SK-N-SH (cell line): ENCODE measurements at regions of chr17 and their contacts with region 1.

Region 1: DNA sequence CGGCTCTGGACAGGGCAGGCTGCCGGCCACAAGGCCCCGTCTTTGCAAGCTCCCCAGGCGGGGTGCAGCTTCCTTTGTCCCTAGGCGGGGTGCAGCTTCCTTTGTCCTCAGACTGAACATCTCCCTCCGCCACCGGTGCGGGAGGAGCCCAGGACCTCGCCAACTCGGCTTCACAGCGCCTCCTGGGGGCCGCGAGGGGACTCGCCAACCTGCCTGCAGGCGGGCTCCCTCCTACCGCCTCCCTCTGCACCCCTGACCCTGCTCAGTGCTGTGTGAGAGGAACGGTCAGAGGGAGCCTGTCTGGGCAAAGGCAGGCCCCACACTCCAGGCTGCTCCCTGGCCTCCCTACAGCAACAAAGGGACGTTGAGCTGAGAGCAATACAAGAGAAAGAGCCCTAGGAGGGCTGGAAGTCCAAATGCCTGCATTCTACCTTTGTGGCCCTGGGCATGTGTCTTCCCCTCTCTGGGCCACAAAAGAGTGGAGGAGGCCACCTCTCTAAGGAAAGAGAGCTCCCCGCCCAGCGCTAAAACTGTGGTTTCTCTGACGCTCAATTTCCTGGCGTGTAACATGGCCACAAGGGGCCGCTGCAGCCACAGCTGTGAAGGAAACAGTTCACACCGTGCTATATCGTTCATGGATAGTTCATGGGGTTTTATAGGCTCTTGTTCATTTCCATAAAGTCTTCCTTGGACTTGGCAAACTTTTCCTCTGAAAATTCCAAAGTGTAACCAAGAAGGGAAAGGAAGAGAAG is 20.9 kb upstream of the KRT19 start:
- DNase-seq: peak; percentile 92
- H3K4me3 ChIP-seq: peak overlapping the region; percentile 21 to 25; a peak in 2 of 4 replicates
- H3K27ac ChIP-seq: peak overlapping the region; percentile 85 to 86
- H3K4me1 ChIP-seq: peaks cover 17 to 30% of the 10 kb centered on the region in 2 experiments; a peak in 3 of 4 replicates
- H3K27me3 ChIP-seq: no peaks in the 10 kb centered on the region
- CTCF ChIP-seq: peak; percentile 94
- EP300 ChIP-seq: peak in 1 of 2 experiments; percentile 6; a peak in 2 of 4 replicates
- RAD21 ChIP-seq: peak; percentile 92

Region 2: GRCh38 chr17:40803617-40804082 is 745.4 kb before region 1 on chr17:
- CTCF ChIA-PET with region 1: interaction called, 11 read pairs
- POLR2A ChIA-PET with region 1: no interaction called
- DNase-seq: peak; percentile 86
- H3K4me3 ChIP-seq: no peak overlapping the region; a peak in 1 of 4 replicates
- H3K27ac ChIP-seq: no peak overlapping the region
- H3K4me1 ChIP-seq: peaks cover 0 to 2% of the 10 kb centered on the region in 2 experiments; a peak in 1 of 4 replicates
- H3K27me3 ChIP-seq: peaks cover 52% of the 10 kb centered on the region
- CTCF ChIP-seq: peak; percentile 94
- EP300 ChIP-seq: no peak
- RAD21 ChIP-seq: peak; percentile 89

Region 3: DNA sequence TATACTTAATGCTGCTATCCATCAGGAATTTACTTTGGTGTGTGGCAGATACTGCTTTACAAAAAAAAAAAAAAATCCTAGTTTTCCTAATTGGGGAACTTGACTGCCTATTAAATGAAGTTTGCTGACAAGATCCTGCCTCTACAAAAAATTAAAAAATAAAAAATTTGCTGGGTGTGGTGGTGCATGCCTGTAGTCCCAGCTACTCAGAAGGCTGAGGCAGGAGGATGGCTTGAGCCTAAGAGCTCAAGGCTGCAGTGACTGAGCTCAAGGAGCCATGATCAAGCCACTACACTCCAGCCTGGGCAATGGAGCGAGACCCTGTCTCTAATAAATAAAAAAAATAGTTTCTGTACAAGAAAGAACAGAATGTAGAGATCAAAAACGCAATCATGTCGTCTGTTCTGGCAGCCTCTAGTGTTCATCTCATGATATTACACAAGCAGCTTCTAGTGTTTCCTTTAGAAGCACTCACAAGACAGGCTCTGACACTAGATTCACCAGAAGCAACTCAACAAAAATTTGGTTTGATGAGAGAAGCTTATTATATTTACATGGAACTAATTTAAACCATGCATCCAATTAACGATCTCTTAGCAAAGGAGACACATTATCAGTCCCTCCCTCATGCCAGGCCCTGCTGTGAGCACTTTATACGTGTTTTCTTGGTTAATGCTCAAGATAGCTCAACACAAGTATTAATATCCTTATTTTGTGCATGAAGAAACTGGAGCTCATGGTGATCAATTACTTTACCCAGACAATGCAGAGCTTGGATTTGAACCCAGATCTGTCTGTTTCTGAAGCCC is 226.7 kb before region 1 on chr17:
- CTCF ChIA-PET with region 1: interaction called, 61 read pairs
- POLR2A ChIA-PET with region 1: no interaction called
- DNase-seq: peak; percentile 50
- H3K4me3 ChIP-seq: no peak overlapping the region
- H3K27ac ChIP-seq: no peak overlapping the region
- H3K4me1 ChIP-seq: no peaks in the 10 kb centered on the region
- H3K27me3 ChIP-seq: no peaks in the 10 kb centered on the region
- CTCF ChIP-seq: peak; percentile 75
- EP300 ChIP-seq: no peak
- RAD21 ChIP-seq: peak; percentile 66

Region 4: GRCh38 chr17:41457676-41458075 is 91.3 kb before region 1 on chr17:
- CTCF ChIA-PET with region 1: interaction called, 16 read pairs
- POLR2A ChIA-PET with region 1: no interaction called
- DNase-seq: no peak
- H3K4me3 ChIP-seq: no peak overlapping the region
- H3K27ac ChIP-seq: no peak overlapping the region
- H3K4me1 ChIP-seq: peaks cover 0 to 6% of the 10 kb centered on the region in 2 experiments; a peak in 1 of 4 replicates
- H3K27me3 ChIP-seq: no peaks in the 10 kb centered on the region
- CTCF ChIP-seq: no peak
- EP300 ChIP-seq: no peak
- RAD21 ChIP-seq: no peak

Region 5: DNA sequence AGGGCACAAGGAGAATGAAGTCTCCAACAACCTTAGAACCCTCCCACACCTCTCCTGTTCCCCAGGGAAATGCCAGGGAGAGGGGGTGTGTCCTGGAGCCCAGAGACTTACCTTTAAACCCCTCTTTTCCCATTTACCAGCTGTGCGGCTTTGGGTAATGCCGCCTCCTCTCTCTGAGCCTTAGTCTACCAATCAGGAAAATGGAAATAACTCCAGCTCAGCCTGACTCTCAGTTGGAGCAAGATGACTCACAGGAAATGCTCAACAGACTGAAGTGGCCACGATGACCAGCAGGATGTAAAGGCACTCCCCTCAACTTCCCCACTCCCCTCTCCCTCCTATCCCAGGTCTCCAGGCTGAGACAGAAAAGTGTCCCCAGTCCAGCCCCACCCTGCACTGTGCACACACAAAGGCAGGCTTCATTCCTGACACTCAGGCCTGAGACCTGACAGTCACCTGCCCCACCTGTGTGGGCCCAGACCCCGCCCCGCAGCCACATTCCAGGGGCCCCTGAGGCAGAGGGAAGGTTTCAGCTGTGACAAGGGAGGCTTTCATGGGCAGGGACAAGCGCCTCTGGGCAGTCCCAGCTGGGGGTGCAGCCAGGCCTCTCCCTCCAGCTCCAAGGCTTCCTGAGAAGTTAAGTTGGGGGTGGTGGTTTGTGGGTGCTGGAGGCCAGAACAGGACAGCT is 27.3 kb before region 1 on chr17:
- CTCF ChIA-PET with region 1: interaction called, 144 read pairs
- POLR2A ChIA-PET with region 1: interaction called, 9 read pairs
- DNase-seq: no peak
- H3K4me3 ChIP-seq: no peak overlapping the region
- H3K27ac ChIP-seq: peak overlapping the region; percentile 59 to 75; a peak in 3 of 4 replicates
- H3K4me1 ChIP-seq: peaks cover 41 to 61% of the 10 kb centered on the region in 2 experiments
- H3K27me3 ChIP-seq: no peaks in the 10 kb centered on the region
- CTCF ChIP-seq: no peak
- EP300 ChIP-seq: peak in 1 of 2 experiments; percentile 46; a peak in 1 of 4 replicates
- RAD21 ChIP-seq: no peak

Region 6: GRCh38 chr17:41588126-41588810 is 39.2 kb after region 1 on chr17:
- CTCF ChIA-PET with region 1: interaction called, 12 read pairs
- POLR2A ChIA-PET with region 1: no interaction called
- DNase-seq: no peak
- H3K4me3 ChIP-seq: no peak overlapping the region
- H3K27ac ChIP-seq: no peak overlapping the region
- H3K4me1 ChIP-seq: no peaks in the 10 kb centered on the region
- H3K27me3 ChIP-seq: peaks cover 21% of the 10 kb centered on the region; the same call in 1 of the 2 replicates
- CTCF ChIP-seq: no peak
- EP300 ChIP-seq: no peak
- RAD21 ChIP-seq: no peak

Region 7: DNA sequence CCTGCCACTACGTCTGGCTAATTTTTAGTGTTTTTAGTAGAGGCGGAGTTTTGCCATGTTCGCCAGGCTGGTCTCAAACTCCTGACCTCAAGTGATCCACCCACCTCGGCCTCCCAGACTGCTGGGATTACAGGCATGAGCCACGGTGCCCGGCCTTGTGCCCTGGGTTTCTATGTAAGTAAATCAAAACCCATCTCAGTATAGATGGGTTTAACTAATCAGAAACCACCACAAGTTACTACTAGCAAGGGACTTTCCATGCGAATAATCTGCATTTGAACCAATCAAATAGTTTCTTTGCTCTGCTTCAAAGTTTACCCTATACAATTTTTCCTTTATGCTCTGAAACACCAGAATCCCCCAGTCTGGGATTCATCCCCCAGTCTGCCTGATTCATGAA is 123.1 kb after region 1 on chr17:
- CTCF ChIA-PET with region 1: interaction called, 534 read pairs
- POLR2A ChIA-PET with region 1: interaction called, 5 read pairs
- DNase-seq: no peak
- H3K4me3 ChIP-seq: no peak overlapping the region
- H3K27ac ChIP-seq: no peak overlapping the region
- H3K4me1 ChIP-seq: peaks cover 0 to under 1% of the 10 kb centered on the region in 2 experiments; a peak in 1 of 4 replicates
- H3K27me3 ChIP-seq: peaks cover 8% of the 10 kb centered on the region; the same call in 1 of the 2 replicates
- CTCF ChIP-seq: no peak
- EP300 ChIP-seq: no peak
- RAD21 ChIP-seq: no peak